Activated CD4-positive, alpha-beta T cell treated with anti-CD3 and anti-CD28 coated beads for 36 hours (primary cell): ENCODE measurements at regions of chr15 and their contacts with region 1.

Region 1: GRCh38 chr15:38129531-38130204 is 123.0 kb upstream of the SPRED1 start:
- DNase-seq: peak; percentile 47
- ATAC-seq: peak; percentile 61
- H3K4me3 Mint-ChIP-seq: no peak overlapping the region
- H3K27ac Mint-ChIP-seq: no peak overlapping the region
- H3K4me1 Mint-ChIP-seq: peaks cover 8% of the 10 kb centered on the region
- H3K27me3 Mint-ChIP-seq: peaks cover 14% of the 10 kb centered on the region

Region 2: DNA sequence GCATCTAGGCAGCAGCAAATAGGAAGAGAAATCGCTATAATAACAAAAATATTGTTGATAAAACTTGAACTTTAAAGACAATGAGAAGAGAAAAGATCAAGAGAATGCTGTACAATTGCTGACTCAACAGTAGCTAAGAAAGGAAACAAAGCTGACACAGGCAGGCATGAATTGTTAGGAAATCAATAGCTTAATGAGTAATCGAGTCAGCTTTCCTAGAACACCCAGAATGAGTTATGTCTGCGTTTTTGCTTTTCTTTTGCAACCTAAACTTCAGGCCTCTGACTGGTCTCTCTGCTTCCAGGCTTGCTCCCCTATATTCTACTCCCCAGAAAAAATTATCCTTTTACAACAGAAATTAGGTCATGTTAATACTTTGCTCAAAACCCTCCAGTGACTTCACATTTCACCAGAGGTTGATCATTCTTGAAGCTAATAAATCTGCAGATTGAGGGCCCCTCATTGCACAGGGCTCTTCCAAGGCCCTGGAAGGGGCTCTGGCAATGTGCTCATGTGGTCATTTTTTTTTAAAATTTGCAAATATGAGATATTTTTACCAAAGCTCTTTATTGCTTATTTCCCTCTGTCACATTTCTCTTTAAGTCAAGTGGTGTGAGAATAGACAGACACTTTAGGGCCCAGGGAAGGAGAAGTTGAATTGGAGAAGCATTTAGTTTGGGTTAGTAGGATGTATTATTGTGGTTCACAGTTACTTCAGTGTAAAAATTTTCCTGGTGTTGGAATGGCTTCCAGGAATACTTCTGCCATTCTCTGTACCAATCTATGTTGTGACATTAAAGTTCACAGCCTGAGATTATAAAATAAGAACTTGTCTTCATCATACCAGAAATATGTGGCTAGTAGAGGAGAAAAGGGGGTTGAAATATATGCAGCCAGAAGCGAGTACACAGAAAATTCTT is 78.9 kb before region 1 on chr15:
- CTCF ChIA-PET with region 1: no interaction called
- POLR2A ChIA-PET with region 1: no interaction called
- intact Hi-C with region 1: no loop called
- DNase-seq: no peak
- ATAC-seq: peak; percentile 44
- H3K4me3 Mint-ChIP-seq: no peak overlapping the region
- H3K27ac Mint-ChIP-seq: no peak overlapping the region
- H3K4me1 Mint-ChIP-seq: no peaks in the 10 kb centered on the region
- H3K27me3 Mint-ChIP-seq: peaks cover 10% of the 10 kb centered on the region

Region 3: GRCh38 chr15:38084289-38084688 is 45.4 kb before region 1 on chr15:
- CTCF ChIA-PET with region 1: no interaction called
- POLR2A ChIA-PET with region 1: interaction called, 4 read pairs
- intact Hi-C with region 1: loop called (anchors 1 kb)
- DNase-seq: no peak
- ATAC-seq: peak; percentile 74
- H3K4me3 Mint-ChIP-seq: no peak overlapping the region
- H3K27ac Mint-ChIP-seq: no peak overlapping the region
- H3K4me1 Mint-ChIP-seq: peaks cover 11% of the 10 kb centered on the region
- H3K27me3 Mint-ChIP-seq: peaks cover 14% of the 10 kb centered on the region